HepG2 (cell line): ENCODE measurements at regions of chr18 and their contacts with region 1.

Region 1: DNA sequence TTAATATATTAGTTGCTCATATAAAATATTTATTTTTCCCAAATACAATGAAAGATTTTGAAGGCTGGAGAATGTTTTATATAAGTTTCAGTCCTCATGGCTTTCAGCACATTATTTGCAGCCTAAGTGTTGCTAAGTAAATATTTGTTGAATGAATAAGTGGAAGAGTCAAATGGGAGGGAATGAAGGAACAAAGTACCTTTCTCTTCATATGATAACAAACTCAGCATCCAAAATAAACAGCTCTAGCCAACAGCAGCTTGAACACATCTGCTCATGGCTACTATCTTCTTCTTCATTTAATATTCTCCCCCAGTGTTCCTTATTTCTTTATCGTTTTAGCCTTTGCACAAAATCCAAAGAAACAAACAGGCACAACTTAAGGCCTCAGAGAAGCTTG is 385.2 kb upstream of the PIK3C3 start:
- DNase-seq: no peak
- ATAC-seq: no peak
- H3K4me3 ChIP-seq: no peak overlapping the region
- H3K27ac ChIP-seq: no peak overlapping the region
- H3K4me1 ChIP-seq: no peaks in the 10 kb centered on the region
- H3K27me3 ChIP-seq: no peaks in the 10 kb centered on the region
- CTCF ChIP-seq: no peak
- EP300 ChIP-seq: no peak
- POLR2A ChIP-seq: no peak
- RAD21 ChIP-seq: no peak

Region 2: GRCh38 chr18:41645589-41646360 is 75.9 kb after region 1 on chr18:
- CTCF ChIA-PET with region 1: no interaction called
- POLR2A ChIA-PET with region 1: no interaction called
- in situ Hi-C with region 1: no loop called
- intact Hi-C with region 1: loop called (anchors 2 kb)
- DNase-seq: no peak
- ATAC-seq: no peak
- H3K4me3 ChIP-seq: no peak overlapping the region
- H3K27ac ChIP-seq: no peak overlapping the region
- H3K4me1 ChIP-seq: peaks cover 18% of the 10 kb centered on the region; the same call in 1 of the 2 replicates
- H3K27me3 ChIP-seq: no peaks in the 10 kb centered on the region
- CTCF ChIP-seq: no peak
- EP300 ChIP-seq: no peak
- POLR2A ChIP-seq: no peak
- RAD21 ChIP-seq: no peak